K562 (cell line): ENCODE measurements at regions of chr3 and their contacts with region 1.

Region 1: DNA sequence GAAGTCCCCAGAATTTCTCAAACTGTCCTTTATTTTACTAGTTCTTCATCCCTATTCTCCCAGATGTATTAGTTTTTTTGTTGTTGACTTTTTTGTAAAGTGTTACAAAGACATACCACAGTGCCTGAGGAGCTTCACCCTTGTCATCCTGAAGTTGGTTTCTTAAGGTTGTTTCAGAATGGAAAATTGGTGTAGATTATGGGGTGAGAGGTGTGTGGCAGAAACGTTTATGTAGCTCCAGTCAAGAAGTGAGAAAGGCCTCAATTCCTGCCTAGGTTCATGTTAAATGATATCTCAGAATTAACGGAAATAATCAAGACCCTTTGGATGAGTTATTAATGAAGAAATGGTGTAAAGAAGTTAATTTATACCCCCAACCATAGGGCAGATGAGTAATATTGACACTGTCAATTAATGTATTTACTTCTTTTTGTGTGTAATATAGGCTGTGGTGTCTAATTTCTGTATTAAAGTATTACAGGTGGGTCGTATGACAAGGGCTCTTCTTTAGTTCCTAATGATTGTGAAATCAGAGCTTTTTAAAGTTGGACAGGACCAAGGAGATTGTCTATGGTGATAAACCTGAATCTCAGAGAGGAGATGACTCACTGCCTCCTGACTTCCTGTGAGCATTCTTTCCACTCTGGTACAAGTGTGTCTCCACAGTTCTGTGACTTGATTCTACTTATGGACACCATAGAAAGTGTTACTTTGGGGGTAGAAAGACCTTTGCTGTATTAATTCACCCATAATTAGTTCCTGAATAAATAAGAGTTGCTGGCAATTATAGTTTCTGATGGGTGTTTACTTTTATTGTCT is 7.0 kb downstream of the EDEM1 start:
- DNase-seq: peak; percentile 45 to 78 (median 62)
- ATAC-seq: peak; percentile 80
- H3K4me3 ChIP-seq: no peak overlapping the region
- H3K27ac ChIP-seq: peak overlapping the region; percentile 1; the same call in 1 of the 3 replicates
- H3K4me1 ChIP-seq: peaks cover 2 to 65% of the 10 kb centered on the region in 2 experiments
- H3K27me3 ChIP-seq: no peaks in the 10 kb centered on the region
- CTCF ChIP-seq: no peak
- EP300 ChIP-seq: peak; percentile 88
- POLR2A ChIP-seq: no peak
- RAD21 ChIP-seq: peak in 1 of 2 experiments; percentile 18; a peak in 1 of 4 replicates

Region 2: DNA sequence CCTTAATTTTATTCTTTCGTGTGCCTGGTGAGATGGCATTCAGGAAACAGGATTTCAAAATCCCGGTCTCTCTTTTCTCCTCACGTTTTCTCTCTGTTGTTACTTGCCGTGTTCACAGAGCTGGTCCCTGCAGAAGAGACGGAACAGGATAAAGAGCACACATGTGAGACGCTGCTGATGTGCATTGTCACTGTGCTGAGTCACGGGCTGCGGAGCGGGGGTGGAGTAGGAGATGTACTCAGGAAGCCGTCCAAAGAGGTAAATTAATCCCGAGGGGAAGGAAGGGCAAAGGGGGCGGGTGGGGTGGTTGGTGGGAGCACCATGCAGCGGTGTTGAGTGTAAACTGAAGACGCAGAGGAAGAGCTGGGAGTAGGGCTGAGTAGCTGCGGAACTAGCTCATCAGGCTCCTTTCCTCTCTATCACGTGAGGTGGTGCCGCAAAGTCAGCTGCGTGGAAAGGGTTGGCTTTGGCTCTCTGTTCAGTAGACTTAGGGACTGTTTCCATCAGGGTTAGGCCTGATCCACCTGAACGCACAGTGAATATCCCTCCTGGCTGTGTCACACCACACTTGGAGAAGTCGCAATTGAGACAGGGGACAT is 380.1 kb before region 1 on chr3:
- CTCF ChIA-PET with region 1: no interaction called
- POLR2A ChIA-PET with region 1: interaction called, 3 read pairs
- in situ Hi-C with region 1: no loop called
- intact Hi-C with region 1: loop called (anchors 5 kb)
- DNase-seq: peak; percentile 96 to 99 (median 98)
- ATAC-seq: peak; percentile 93
- H3K4me3 ChIP-seq: peak overlapping the region; percentile 39
- H3K27ac ChIP-seq: peak overlapping the region; percentile 93
- H3K4me1 ChIP-seq: peaks cover 16 to 67% of the 10 kb centered on the region in 2 experiments
- H3K27me3 ChIP-seq: no peaks in the 10 kb centered on the region
- CTCF ChIP-seq: no peak
- EP300 ChIP-seq: peak; percentile 96
- POLR2A ChIP-seq: peak; percentile 84
- RAD21 ChIP-seq: peak in 1 of 2 experiments; percentile 19; a peak in 2 of 4 replicates

Region 3: GRCh38 chr3:5136211-5136918 is 58.2 kb before region 1 on chr3:
- CTCF ChIA-PET with region 1: no interaction called
- POLR2A ChIA-PET with region 1: no interaction called
- in situ Hi-C with region 1: no loop called
- intact Hi-C with region 1: loop called (anchors 2 kb)
- DNase-seq: peak in 2 of 4 experiments; percentile 52 to 55
- ATAC-seq: peak; percentile 78
- H3K4me3 ChIP-seq: no peak overlapping the region
- H3K27ac ChIP-seq: no peak overlapping the region
- H3K4me1 ChIP-seq: 0 out of 5 replicates have a peak, but pooled peaks cover 0 to 7% of the 10 kb centered on the region in 2 experiments
- H3K27me3 ChIP-seq: no peaks in the 10 kb centered on the region
- CTCF ChIP-seq: peak; percentile 46 to 73 (median 62)
- EP300 ChIP-seq: no peak
- POLR2A ChIP-seq: no peak
- RAD21 ChIP-seq: peak; percentile 48 to 65

Region 4: DNA sequence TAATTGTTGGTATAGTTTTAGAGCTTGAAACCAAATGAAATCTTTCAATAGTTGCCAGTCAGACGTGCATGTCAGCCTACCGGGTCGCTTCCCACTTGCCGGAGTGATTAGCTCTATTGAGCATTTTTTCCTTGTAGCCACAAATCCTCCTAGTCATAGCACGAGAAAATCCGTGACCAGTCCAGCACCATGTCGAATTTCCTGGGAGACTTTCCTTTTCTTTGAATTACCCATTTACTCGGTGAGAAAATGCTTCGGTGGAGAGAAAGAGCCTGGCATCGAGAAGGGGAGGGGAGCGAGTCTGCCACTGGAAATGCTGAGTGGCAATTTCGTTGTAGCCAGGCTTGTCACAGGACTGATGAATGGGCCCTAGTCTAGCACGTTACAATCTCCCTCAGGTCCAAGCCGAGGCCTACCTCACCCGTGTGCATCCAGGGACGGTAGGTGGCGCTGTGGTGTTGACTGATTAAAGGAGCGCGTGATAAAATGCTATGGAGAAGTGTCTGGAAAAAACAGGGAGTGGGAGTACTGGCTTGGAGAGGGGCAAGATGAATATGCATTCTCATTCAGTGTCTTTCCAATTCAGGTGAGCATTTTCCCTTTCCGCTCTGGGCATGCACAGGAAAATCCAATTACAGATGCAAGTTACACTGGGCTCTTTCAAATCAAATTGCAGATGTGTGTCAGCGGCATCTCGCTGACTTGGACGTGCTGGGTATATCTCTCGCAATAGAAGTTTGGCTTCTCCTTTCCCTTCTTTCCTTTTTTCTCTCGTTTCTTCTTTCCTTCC is 231.7 kb after region 1 on chr3:
- CTCF ChIA-PET with region 1: no interaction called
- POLR2A ChIA-PET with region 1: no interaction called
- in situ Hi-C with region 1: no loop called
- intact Hi-C with region 1: no loop called
- DNase-seq: peak; percentile 77 to 96 (median 85)
- ATAC-seq: peak; percentile 80
- H3K4me3 ChIP-seq: no peak overlapping the region
- H3K27ac ChIP-seq: no peak overlapping the region; the same call in 2 of the 3 replicates
- H3K4me1 ChIP-seq: peaks cover 19 to 48% of the 10 kb centered on the region in 2 experiments
- H3K27me3 ChIP-seq: no peaks in the 10 kb centered on the region
- CTCF ChIP-seq: peak; percentile 89 to 99 (median 97)
- EP300 ChIP-seq: peak; percentile 51
- POLR2A ChIP-seq: no peak
- RAD21 ChIP-seq: peak; percentile 98